ENCODE measurements at regions of chr3 and their contacts with region 1.

Region 1: DNA sequence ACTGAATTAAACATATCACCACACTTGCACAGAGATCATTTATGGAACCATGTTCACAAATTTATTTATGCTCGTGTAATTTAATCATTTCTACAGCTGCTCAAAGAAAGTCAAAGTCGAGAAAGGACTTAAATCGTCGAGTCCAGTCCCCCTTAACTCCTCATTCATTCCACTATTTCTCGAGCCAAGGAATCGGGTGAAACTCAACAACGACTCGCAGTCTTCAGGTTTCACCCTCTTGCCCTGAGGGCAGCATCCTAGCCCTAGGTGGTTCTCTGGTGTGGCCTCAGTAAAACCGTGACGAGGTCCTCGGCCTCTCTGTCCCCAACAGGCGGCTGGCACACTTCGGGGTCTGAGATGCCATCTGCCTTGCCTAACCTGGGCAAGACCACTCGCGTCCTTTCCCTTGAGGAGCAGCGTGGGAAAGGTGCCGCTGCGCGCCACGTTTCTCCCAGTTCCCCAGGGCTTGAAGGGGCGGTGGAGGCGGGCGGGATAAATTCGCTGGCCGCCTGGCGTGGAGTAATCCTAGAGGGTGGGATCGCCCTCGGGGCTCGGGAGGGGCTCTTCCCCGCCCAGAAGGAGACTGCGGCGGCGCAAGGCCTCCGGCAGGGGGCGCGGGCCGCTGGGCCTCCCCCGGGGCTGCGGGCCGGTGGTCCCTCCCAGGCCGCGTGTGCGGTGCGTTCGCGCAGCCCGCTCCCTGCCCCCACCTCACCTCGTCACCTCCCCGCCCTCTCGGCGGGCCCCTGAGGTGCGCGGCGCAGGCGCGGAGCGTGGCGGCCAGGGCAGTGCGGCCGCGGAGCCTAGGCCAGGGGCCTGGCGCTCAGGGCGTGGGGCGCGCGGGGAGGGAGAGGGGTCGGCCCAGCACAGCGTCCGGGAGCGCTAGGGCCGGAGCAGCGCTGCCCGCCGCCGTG is at the start of gene ZNF639:
- DNase-seq: peak; percentile 89
- ATAC-seq: peak; percentile 72
- H3K4me3 ChIP-seq: peak within 1 kb of the TSS; percentile 82
- H3K27ac ChIP-seq: peak within 1 kb of the TSS; percentile 68
- H3K4me1 ChIP-seq: peaks cover 24% of the 10 kb centered on the region; the same call in 1 of the 2 replicates
- H3K27me3 ChIP-seq: no peaks in the 10 kb centered on the region
- CTCF ChIP-seq: peak; percentile 72
- total RNA-seq, gene ZNF639: 52.5 and 60.4 TPM in 2 replicates

Region 2: GRCh38 chr3:178436773-178437172 is 885.8 kb before region 1 on chr3:
- CTCF ChIA-PET with region 1: no interaction called
- POLR2A ChIA-PET with region 1: no interaction called
- intact Hi-C with region 1: loop called (anchors 5 kb)
- DNase-seq: peak; percentile 60
- ATAC-seq: no peak
- H3K4me3 ChIP-seq: no peak overlapping the region
- H3K27ac ChIP-seq: no peak overlapping the region
- H3K4me1 ChIP-seq: no peaks in the 10 kb centered on the region
- H3K27me3 ChIP-seq: no peaks in the 10 kb centered on the region
- CTCF ChIP-seq: peak; percentile 70

Region 3: GRCh38 chr3:179071550-179072397 is 250.8 kb before region 1 on chr3 and contains the start of gene ZMAT3:
- CTCF ChIA-PET with region 1: interaction called, 3 read pairs
- POLR2A ChIA-PET with region 1: no interaction called
- intact Hi-C with region 1: loop called (anchors 1 kb)
- DNase-seq: peak; percentile 83
- ATAC-seq: peak; percentile 91
- H3K4me3 ChIP-seq: peak within 1 kb of the TSS; percentile 82
- H3K27ac ChIP-seq: peak within 1 kb of the TSS; percentile 27
- H3K4me1 ChIP-seq: peaks cover 9% of the 10 kb centered on the region
- H3K27me3 ChIP-seq: no peaks in the 10 kb centered on the region
- CTCF ChIP-seq: no peak
- total RNA-seq, gene ZMAT3: 2.0 and 2.9 TPM in 2 replicates

Region 4: GRCh38 chr3:179088306-179088705 is 234.2 kb before region 1 on chr3:
- CTCF ChIA-PET with region 1: no interaction called
- POLR2A ChIA-PET with region 1: no interaction called
- intact Hi-C with region 1: no loop called
- DNase-seq: no peak
- ATAC-seq: no peak
- H3K4me3 ChIP-seq: no peak overlapping the region
- H3K27ac ChIP-seq: no peak overlapping the region
- H3K4me1 ChIP-seq: no peaks in the 10 kb centered on the region
- H3K27me3 ChIP-seq: no peaks in the 10 kb centered on the region
- CTCF ChIP-seq: no peak

Region 5: GRCh38 chr3:179108086-179108485 is 214.5 kb before region 1 on chr3:
- CTCF ChIA-PET with region 1: no interaction called
- POLR2A ChIA-PET with region 1: no interaction called
- intact Hi-C with region 1: loop called (anchors 1 kb)
- DNase-seq: peak; percentile 76
- ATAC-seq: peak; percentile 91
- H3K4me3 ChIP-seq: no peak overlapping the region
- H3K27ac ChIP-seq: peak overlapping the region; percentile 35
- H3K4me1 ChIP-seq: peaks cover 14% of the 10 kb centered on the region
- H3K27me3 ChIP-seq: no peaks in the 10 kb centered on the region
- CTCF ChIP-seq: no peak

Region 6: GRCh38 chr3:179260949-179261765 is 61.4 kb before region 1 on chr3:
- CTCF ChIA-PET with region 1: interaction called, 5 read pairs
- POLR2A ChIA-PET with region 1: no interaction called
- intact Hi-C with region 1: loop called (anchors 5 kb)
- DNase-seq: peak; percentile 77
- ATAC-seq: peak; percentile 97
- H3K4me3 ChIP-seq: peak overlapping the region; percentile 79
- H3K27ac ChIP-seq: no peak overlapping the region
- H3K4me1 ChIP-seq: peaks cover 11% of the 10 kb centered on the region
- H3K27me3 ChIP-seq: no peaks in the 10 kb centered on the region
- CTCF ChIP-seq: no peak

Region 7: DNA sequence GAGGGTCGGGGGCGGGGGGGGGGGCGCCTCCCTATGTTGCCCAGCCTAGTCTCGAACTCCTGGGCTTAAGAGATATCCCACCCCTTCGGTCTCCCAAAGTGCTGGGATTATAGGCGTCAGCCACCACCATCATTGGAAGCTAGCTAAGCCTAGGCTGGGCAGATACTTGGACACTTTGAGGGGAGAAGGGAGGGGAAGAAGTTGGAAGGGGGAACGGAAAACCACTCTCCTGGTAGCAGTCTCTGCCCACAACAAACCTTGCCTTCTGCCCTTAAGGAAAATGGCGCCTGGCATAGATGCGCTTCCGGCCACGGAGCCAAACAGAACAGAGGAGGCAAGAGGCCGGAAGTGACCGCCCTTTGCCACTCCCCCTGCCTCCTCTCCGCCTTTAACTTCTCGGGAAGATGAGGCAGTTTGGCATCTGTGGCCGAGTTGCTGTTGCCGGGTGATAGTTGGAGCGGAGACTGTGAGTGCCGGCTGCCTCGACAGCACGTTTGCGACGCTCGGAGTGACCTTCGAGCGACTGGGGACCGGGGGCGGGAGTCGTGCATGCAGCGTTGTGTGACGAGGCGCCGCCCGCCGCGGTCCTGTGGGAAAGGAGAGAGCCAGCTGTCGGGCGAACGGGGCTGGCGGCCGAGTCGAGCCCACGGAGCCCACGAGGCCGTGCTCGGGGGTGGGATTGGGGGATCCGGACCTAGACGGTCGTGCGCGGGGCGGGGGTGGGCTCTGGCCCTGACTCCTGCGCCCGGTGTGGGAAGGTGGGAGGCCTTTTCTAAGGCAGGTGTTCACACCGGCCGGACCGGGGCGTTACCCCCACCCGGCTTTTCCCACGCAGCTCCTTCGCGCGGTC is 25.0 kb after region 1 on chr3 and contains the start of gene MFN1:
- CTCF ChIA-PET with region 1: no interaction called
- POLR2A ChIA-PET with region 1: no interaction called
- intact Hi-C with region 1: loop called (anchors 2 kb)
- DNase-seq: peak; percentile 94
- ATAC-seq: peak; percentile 93
- H3K4me3 ChIP-seq: peak within 1 kb of the TSS; percentile 89
- H3K27ac ChIP-seq: peak within 1 kb of the TSS; percentile 12; the same call in 1 of the 2 replicates
- H3K4me1 ChIP-seq: peaks cover 13% of the 10 kb centered on the region
- H3K27me3 ChIP-seq: no peaks in the 10 kb centered on the region
- CTCF ChIP-seq: no peak
- total RNA-seq, gene MFN1: 41.2 and 42.8 TPM in 2 replicates

Region 8: GRCh38 chr3:179562591-179563270 is 240.2 kb after region 1 on chr3 and contains the start of gene ACTL6A:
- CTCF ChIA-PET with region 1: no interaction called
- POLR2A ChIA-PET with region 1: no interaction called
- intact Hi-C with region 1: loop called (anchors 1 kb)
- DNase-seq: peak; percentile 100
- ATAC-seq: peak; percentile 94
- H3K4me3 ChIP-seq: peak within 1 kb of the TSS; percentile 89
- H3K27ac ChIP-seq: peak within 1 kb of the TSS; percentile 49
- H3K4me1 ChIP-seq: peaks cover 23% of the 10 kb centered on the region
- H3K27me3 ChIP-seq: no peaks in the 10 kb centered on the region
- CTCF ChIP-seq: no peak
- total RNA-seq, gene ACTL6A: 102 and 105 TPM in 2 replicates